Naive thymus-derived CD4-positive, alpha-beta T cell (primary cell): ENCODE measurements at regions of chr13 and their contacts with region 1.

Region 1: DNA sequence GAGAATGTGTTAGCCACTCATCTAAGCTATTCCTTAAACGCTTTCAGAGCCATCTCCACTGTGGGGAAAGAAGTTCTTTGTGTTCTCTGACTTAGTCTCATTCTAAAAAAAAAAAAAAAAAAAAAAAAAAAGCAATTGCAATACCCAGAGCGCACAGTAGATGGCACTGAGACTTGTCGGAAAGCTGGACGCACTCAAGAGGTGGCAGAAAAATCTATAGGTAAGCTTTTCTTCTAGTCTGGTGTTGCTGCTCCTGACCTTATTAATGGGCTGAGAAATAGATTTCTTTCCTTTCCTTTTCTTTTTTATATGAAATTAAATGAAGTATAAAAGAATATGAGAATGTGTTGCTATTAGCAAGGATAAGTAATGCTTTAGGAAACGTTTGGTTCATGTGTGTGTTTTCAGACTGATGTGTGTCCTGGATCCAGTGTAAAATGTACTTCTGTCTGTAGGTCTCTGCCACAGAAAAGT is 4.7 kb upstream of the GJB2 start:
- DNase-seq: peak in 5 of 9 donors; percentile 38 to 59 (median 51)
- ATAC-seq: peak; percentile 81
- H3K4me3 ChIP-seq: no peak overlapping the region
- H3K4me3 Mint-ChIP-seq: no peak overlapping the region
- H3K27ac ChIP-seq: no peak overlapping the region
- H3K27ac Mint-ChIP-seq: peak overlapping the region in 1 of 9 donors; percentile 57
- H3K4me1 ChIP-seq: peaks cover 11 to 20% of the 10 kb centered on the region in 2 donors
- H3K4me1 Mint-ChIP-seq: peaks cover 15 to 26% (median 19%) of the 10 kb centered on the region in 7 donors
- H3K27me3 ChIP-seq: peaks cover 27 to 41% of the 10 kb centered on the region in 2 donors
- H3K27me3 Mint-ChIP-seq: peaks cover 30 to 64% (median 48%) of the 10 kb centered on the region in 5 donors

Region 2: DNA sequence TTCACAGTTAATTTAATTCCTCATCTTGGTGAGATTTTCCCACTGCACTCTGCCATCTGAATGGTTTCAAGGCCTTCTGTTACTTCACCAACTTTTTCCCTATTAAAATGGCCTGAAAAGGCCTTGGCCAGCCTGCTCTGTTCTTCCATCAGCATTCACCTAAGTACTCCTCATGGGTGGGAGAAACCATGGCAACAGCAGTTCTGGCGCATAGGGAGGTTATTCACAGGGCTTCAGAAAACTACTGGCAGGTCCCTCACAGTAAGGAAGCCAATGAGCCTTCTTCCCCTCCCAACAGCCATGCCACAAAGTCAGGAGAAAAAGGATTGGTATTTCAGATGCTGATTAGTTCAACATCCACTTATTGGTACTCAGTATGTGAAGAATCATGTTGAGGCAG is 12.6 kb after region 1 on chr13:
- CTCF ChIA-PET with region 1: no interaction called
- POLR2A ChIA-PET with region 1: no interaction called
- intact Hi-C with region 1: no loop called
- DNase-seq: no peak
- ATAC-seq: no peak
- H3K4me3 ChIP-seq: no peak overlapping the region
- H3K4me3 Mint-ChIP-seq: no peak overlapping the region
- H3K27ac ChIP-seq: no peak overlapping the region
- H3K27ac Mint-ChIP-seq: no peak overlapping the region
- H3K4me1 ChIP-seq: no peaks in the 10 kb centered on the region
- H3K4me1 Mint-ChIP-seq: peaks cover 0 to 4% (median 0%) of the 10 kb centered on the region in 7 donors
- H3K27me3 ChIP-seq: no peaks in the 10 kb centered on the region
- H3K27me3 Mint-ChIP-seq: peaks cover 0 to 42% (median 19%) of the 10 kb centered on the region in 5 donors

Region 3: DNA sequence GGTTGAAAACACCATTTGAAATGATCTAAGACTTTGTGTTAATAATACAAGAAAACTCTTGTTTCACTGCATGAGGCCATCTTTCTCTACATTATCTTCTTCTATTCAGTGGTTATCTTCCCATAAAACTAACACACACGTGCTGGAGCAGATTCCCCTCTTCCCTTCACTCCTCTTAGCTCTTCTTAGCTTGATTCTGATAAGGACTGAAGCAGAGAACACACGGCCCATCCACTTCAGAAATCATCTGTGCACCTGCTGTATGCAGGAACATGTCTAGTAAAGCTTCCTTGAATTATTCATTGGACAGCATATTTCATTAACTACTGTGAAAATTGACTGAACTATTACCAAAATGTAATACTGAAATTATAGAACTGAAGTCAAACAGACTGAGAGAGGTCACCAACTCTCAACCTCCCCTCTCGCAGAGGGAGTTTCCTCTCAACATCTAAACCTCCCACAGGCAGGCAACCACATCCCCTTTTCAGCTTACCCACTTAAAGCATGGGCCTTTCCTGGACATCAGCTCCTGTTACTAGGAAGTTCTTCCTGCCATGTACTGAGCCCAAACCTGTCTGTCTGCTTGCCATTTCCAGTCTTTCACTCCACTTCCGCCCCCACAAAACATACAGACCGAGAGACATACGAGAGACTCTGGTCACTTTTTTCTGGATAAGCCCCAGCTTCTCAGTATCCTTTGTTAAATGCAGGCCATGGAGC is 214.4 kb after region 1 on chr13:
- CTCF ChIA-PET with region 1: no interaction called
- POLR2A ChIA-PET with region 1: no interaction called
- intact Hi-C with region 1: loop called in 1 of 2 experiments (anchors 10 kb)
- DNase-seq: peak in 7 of 9 donors; percentile 16 to 52 (median 45)
- ATAC-seq: peak; percentile 89
- H3K4me3 ChIP-seq: no peak overlapping the region
- H3K4me3 Mint-ChIP-seq: peak overlapping the region; percentile 37 to 80 (median 64)
- H3K27ac ChIP-seq: no peak overlapping the region
- H3K27ac Mint-ChIP-seq: peak overlapping the region; percentile 78 to 93 (median 84)
- H3K4me1 ChIP-seq: peaks cover 13 to 25% of the 10 kb centered on the region in 2 donors
- H3K4me1 Mint-ChIP-seq: peaks cover 11 to 34% (median 29%) of the 10 kb centered on the region in 7 donors
- H3K27me3 ChIP-seq: no peaks in the 10 kb centered on the region
- H3K27me3 Mint-ChIP-seq: no peaks in the 10 kb centered on the region

Region 4: GRCh38 chr13:20703780-20704445 is 506.5 kb after region 1 on chr13:
- CTCF ChIA-PET with region 1: no interaction called
- POLR2A ChIA-PET with region 1: no interaction called
- intact Hi-C with region 1: loop called in 1 of 2 experiments (anchors 5 kb)
- DNase-seq: peak; percentile 70 to 84 (median 80)
- ATAC-seq: peak; percentile 93
- H3K4me3 ChIP-seq: no peak overlapping the region
- H3K4me3 Mint-ChIP-seq: peak overlapping the region in 4 of 10 donors; percentile 59 to 97 (median 72)
- H3K27ac ChIP-seq: no peak overlapping the region
- H3K27ac Mint-ChIP-seq: peak overlapping the region in 1 of 9 donors; percentile 56
- H3K4me1 ChIP-seq: peaks cover 3 to 8% of the 10 kb centered on the region in 2 donors
- H3K4me1 Mint-ChIP-seq: peaks cover 0 to 13% (median 8%) of the 10 kb centered on the region in 7 donors
- H3K27me3 ChIP-seq: peaks cover 0 to 5% of the 10 kb centered on the region in 2 donors
- H3K27me3 Mint-ChIP-seq: peaks cover 13 to 48% (median 17%) of the 10 kb centered on the region in 5 donors

Region 5: DNA sequence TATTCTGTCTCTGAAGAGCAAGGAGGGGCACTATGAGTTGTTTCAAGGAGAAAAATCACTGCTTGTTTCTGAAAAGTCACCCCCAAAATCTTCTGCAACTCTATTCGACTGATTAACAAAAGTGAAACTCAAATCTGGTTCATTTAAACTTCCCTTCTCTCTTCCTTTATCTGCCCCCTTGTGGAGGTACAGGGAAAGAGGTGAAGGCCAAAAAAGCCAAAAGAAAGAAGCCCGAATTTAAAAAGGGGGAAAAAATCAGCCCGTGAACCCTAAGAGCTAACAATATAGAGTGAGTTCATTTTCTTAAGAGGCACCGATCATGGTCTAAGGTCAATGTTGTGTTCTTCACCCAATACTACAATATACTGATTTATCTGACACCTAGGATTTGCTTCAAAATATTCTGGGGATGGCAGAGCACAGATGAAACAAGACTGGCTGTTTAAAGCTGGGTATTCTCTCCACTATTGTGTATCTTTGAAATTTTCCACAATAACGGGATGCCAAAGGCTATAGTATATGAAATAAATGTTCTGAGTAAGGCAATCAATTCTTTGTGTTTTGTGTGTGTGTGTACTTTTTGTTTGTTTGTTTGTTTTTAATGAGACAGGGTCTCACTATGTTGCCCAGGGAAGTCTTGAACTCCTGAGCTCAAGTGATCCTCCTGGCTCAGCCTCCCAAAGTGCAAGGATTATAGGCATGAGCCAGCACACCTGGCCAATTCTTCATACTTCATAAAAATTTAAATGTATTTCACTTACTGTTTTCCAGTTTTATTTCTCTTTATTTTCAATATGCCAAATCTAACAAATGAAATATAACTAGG is 631.4 kb after region 1 on chr13:
- CTCF ChIA-PET with region 1: interaction called, 10 read pairs
- POLR2A ChIA-PET with region 1: no interaction called
- intact Hi-C with region 1: loop called (anchors 1 to 5 kb)
- DNase-seq: peak in 7 of 9 donors; percentile 46 to 75 (median 67)
- ATAC-seq: peak; percentile 93
- H3K4me3 ChIP-seq: no peak overlapping the region
- H3K4me3 Mint-ChIP-seq: peak overlapping the region in 8 of 10 donors; percentile 51 to 81 (median 73)
- H3K27ac ChIP-seq: peak overlapping the region; percentile 14
- H3K27ac Mint-ChIP-seq: peak overlapping the region; percentile 35 to 87 (median 77)
- H3K4me1 ChIP-seq: no peaks in the 10 kb centered on the region
- H3K4me1 Mint-ChIP-seq: peaks cover 7 to 15% (median 10%) of the 10 kb centered on the region in 7 donors
- H3K27me3 ChIP-seq: no peaks in the 10 kb centered on the region
- H3K27me3 Mint-ChIP-seq: no peaks in the 10 kb centered on the region